Sigmoid colon (tissue), 7 donors: ENCODE measurements at regions of chr15 and their contacts with region 1.

Region 1: GRCh38 chr15:85595804-85596536 is 198.8 kb downstream of the KLHL25 start:
- DNase-seq: no peak
- H3K4me3 ChIP-seq: no peak overlapping the region
- H3K27ac ChIP-seq: no peak overlapping the region
- H3K4me1 ChIP-seq: peaks cover 0 to 34% (median 19%) of the 10 kb centered on the region in 4 donors
- H3K27me3 ChIP-seq: no peaks in the 10 kb centered on the region
- CTCF ChIP-seq: no peak
- EP300 ChIP-seq: no peak
- POLR2A ChIP-seq: no peak

Region 2: DNA sequence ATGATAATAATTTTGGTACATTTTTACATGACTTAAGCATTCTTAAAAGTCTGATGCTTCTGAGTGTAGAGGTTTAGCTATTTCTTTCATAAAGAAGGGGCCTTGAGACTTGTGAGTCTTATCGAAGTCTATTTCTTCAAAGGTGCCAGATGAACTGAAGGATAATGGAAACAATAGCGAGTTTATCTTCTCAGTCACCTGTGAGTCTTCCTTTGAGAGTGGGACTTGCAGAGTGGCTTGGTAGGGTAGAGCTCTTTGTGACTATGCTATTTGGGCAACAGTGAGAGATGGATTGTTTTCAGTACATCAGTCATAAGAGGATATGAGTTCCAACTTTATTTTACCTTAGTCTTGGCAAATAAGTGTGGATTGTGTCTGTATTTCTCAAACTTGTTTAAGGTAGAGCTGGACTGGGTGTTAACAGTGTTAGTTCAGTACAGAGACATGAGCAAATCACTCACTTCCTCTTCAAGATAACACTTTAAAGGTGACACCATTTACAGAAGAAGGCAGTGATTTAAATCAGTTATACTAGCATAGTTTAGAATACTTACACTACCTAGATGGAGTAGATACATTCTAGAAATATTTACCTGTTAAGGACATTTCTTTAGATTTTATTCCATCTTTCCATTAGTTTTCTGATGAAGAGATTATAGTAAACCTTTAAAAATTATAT is 212.4 kb before region 1 on chr15:
- intact Hi-C with region 1: no loop called
- DNase-seq: no peak
- H3K4me3 ChIP-seq: no peak overlapping the region
- H3K27ac ChIP-seq: peak overlapping the region in 3 of 4 donors; percentile 93 to 98 (median 98)
- H3K4me1 ChIP-seq: peaks cover 0 to 38% (median 23%) of the 10 kb centered on the region in 4 donors
- H3K27me3 ChIP-seq: no peaks in the 10 kb centered on the region
- CTCF ChIP-seq: no peak
- EP300 ChIP-seq: no peak
- POLR2A ChIP-seq: no peak

Region 3: GRCh38 chr15:85534031-85534430 is 61.9 kb before region 1 on chr15:
- intact Hi-C with region 1: no loop called
- DNase-seq: no peak
- H3K4me3 ChIP-seq: no peak overlapping the region
- H3K27ac ChIP-seq: no peak overlapping the region
- H3K4me1 ChIP-seq: peaks cover 0 to 7% (median 0%) of the 10 kb centered on the region in 4 donors
- H3K27me3 ChIP-seq: no peaks in the 10 kb centered on the region
- CTCF ChIP-seq: no peak
- EP300 ChIP-seq: no peak
- POLR2A ChIP-seq: no peak

Region 4: DNA sequence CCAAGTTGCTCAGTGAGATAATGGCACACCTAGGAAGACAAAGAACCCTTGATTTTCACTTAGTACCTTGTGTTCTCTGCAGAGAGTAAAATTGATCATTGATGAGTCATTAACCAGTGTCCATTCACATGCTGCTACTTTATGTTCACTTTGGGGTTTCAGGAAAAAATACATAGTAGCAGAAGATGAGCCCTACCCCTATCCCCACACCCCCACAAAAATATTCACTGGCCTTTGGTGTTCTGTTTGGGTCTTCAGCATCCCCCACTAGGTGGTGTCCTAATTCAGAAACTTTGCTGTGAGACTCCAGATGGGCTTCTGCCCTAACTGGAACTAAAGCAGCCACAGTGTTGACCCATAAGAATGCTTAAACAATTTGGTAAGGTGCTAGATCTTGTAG is 20.0 kb after region 1 on chr15:
- intact Hi-C with region 1: loop called (anchors 2 kb)
- DNase-seq: no peak
- H3K4me3 ChIP-seq: no peak overlapping the region
- H3K27ac ChIP-seq: peak overlapping the region in 3 of 4 donors; percentile 81 to 89 (median 87)
- H3K4me1 ChIP-seq: peaks cover 0 to 71% (median 57%) of the 10 kb centered on the region in 4 donors
- H3K27me3 ChIP-seq: no peaks in the 10 kb centered on the region
- CTCF ChIP-seq: peak in 2 of 4 experiments; percentile 17 to 26
- EP300 ChIP-seq: no peak
- POLR2A ChIP-seq: no peak